ENCODE measurements at regions of chr12 and their contacts with region 1.

Region 1: GRCh38 chr12:104108755-104109445 is 29.1 kb downstream of the NFYB start:
- DNase-seq: peak; percentile 70
- H3K4me3 Mint-ChIP-seq: no peak overlapping the region
- H3K27ac Mint-ChIP-seq: no peak overlapping the region
- H3K4me1 Mint-ChIP-seq: peaks cover 11% of the 10 kb centered on the region
- H3K27me3 Mint-ChIP-seq: no peaks in the 10 kb centered on the region

Region 2: DNA sequence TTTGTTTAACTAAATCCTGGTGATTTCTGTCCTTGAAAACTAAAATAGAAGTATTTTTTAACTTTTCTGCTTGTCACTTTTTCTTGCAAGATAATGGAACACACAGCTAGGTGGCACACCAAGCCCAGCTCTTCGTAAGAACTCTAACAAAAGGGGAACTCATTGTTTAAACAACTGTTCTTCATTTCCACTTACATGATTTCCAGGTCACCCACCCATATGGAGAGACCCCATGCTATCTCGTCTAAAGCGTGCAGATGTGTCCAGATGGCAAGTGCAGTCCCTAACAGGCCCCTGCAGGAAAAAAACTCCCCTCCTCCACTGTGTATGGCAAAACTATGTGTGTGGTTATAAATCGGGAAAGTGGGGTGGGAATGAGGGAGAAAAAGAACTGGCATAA is 224.6 kb before region 1 on chr12:
- intact Hi-C with region 1: loop called (anchors 1 kb)
- DNase-seq: no peak
- H3K4me3 Mint-ChIP-seq: no peak overlapping the region
- H3K27ac Mint-ChIP-seq: no peak overlapping the region
- H3K4me1 Mint-ChIP-seq: peaks cover 48% of the 10 kb centered on the region
- H3K27me3 Mint-ChIP-seq: peaks cover 3% of the 10 kb centered on the region

Region 3: GRCh38 chr12:103956516-103957027 is 152.3 kb before region 1 on chr12:
- intact Hi-C with region 1: loop called (anchors 5 kb)
- DNase-seq: peak; percentile 3
- H3K4me3 Mint-ChIP-seq: peak overlapping the region; percentile 100
- H3K27ac Mint-ChIP-seq: peak overlapping the region; percentile 100
- H3K4me1 Mint-ChIP-seq: peaks cover 61% of the 10 kb centered on the region
- H3K27me3 Mint-ChIP-seq: no peaks in the 10 kb centered on the region

Region 4: DNA sequence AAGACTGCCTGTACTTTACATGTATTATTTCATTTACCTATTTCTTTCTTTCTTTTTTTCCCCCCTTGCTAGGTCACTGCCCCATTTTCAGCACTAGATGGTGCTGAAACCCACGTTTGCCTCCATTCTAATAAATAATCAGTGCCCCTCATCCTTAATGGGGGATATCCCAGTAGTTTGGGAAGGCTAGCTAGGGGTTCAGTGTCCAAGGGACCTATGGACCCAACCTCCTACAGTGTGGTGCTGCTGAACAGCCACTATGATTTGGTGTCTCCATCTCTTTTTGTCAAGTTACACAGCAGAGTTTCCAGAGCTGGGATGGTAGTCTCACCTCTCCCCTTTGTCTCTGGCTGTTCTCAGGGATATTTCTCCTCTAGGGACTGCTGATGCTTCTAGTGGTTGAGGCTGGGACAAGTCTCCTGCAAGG is 51.1 kb before region 1 on chr12:
- intact Hi-C with region 1: loop called (anchors 1 kb)
- DNase-seq: no peak
- H3K4me3 Mint-ChIP-seq: no peak overlapping the region
- H3K27ac Mint-ChIP-seq: no peak overlapping the region
- H3K4me1 Mint-ChIP-seq: peaks cover 8% of the 10 kb centered on the region
- H3K27me3 Mint-ChIP-seq: peaks cover 54% of the 10 kb centered on the region

Region 5: DNA sequence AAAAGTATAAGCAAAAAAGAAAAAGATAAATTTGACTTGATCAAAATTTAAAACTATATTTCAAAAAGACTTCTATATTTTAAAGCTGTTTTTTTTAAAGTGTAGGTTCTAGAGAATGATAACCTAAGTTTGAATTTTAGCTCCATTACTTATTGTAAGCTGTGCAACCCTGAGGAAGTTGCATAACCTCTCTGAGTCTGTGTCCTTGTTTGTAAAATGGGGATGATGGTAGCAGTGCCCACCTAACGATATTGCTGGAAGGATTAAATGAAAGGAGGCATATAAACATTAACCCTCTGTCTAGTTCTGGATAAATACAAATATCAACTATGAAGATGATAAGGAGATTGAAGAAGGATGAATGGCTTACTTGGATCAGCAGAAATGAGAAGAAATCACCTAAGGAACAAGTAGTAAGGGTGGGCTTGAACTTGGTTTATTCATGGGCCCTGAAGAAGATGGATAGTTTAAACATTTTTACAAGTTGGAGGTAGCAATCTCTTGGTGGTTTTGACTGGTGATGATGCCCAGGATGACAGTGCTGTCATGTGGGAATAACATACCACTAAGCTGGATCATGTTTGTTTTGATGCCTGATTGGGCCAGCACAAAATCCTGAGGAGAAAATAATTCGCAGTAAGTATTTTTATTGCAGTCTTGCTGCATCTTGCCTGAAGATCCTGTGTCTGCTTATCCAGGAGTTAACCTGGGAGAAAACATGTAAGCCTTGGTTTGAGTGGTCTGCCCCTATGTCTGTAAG is 141.6 kb after region 1 on chr12:
- intact Hi-C with region 1: no loop called
- DNase-seq: no peak
- H3K4me3 Mint-ChIP-seq: no peak overlapping the region
- H3K27ac Mint-ChIP-seq: no peak overlapping the region
- H3K4me1 Mint-ChIP-seq: no peaks in the 10 kb centered on the region
- H3K27me3 Mint-ChIP-seq: no peaks in the 10 kb centered on the region